Activated B cell treated with CpG ODN at 0.5 μM for 24 hours (primary cell): ENCODE measurements at regions of chr2 and their contacts with region 1.

Region 1: DNA sequence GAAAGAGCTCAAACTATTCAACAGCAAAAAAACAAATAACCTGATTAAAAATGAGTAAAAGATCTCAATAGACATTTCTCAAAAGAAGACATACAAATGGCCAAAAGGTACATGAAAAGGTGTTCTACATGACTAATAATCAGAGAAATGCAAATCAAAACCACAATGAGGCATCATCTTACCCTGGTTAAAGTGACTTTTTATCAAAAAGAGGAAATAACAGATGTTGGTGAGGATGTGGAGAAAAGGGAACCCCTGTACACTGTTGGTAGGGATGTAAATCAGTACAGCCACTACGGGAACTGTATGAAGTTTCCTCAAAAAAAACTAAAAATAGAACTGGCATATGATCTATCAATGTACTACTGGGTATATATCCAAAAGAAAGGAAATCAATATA is 39.8 kb upstream of the TMEM163 start:
- DNase-seq: no peak
- ATAC-seq: peak; percentile 95
- H3K4me3 Mint-ChIP-seq: peak overlapping the region; percentile 16
- H3K27ac Mint-ChIP-seq: peak overlapping the region; percentile 74
- H3K4me1 Mint-ChIP-seq: peaks cover 30% of the 10 kb centered on the region
- H3K27me3 Mint-ChIP-seq: no peaks in the 10 kb centered on the region
- CTCF ChIP-seq: no peak

Region 2: DNA sequence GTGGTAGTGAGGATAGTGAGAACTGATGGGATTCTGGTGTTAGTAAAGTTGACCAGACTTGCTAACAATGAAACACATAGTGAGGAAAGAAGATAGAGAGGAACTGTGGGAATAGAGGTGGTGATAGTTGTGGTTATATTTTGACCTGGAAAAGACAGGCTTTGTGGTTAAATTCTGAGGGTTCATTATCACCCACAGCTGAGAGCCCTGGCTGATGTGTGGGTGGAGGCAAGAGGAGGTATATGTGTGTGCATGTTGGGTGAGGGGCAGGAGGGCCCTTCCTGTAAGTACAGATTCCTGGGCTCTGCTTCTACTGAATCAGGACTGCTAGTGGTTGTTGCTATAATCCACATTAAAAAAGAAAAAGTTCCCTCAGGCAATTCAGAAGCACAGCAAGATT is 13.6 kb before region 1 on chr2:
- CTCF ChIA-PET with region 1: interaction called, 4 read pairs
- POLR2A ChIA-PET with region 1: interaction called, 37 read pairs
- intact Hi-C with region 1: loop called (anchors 1 kb)
- DNase-seq: no peak
- ATAC-seq: no peak
- H3K4me3 Mint-ChIP-seq: no peak overlapping the region
- H3K27ac Mint-ChIP-seq: peak overlapping the region; percentile 5
- H3K4me1 Mint-ChIP-seq: peaks cover 32% of the 10 kb centered on the region
- H3K27me3 Mint-ChIP-seq: no peaks in the 10 kb centered on the region
- CTCF ChIP-seq: no peak

Region 3: GRCh38 chr2:134818321-134818720 is 59.7 kb after region 1 on chr2:
- CTCF ChIA-PET with region 1: no interaction called
- POLR2A ChIA-PET with region 1: interaction called, 11 read pairs
- intact Hi-C with region 1: no loop called
- DNase-seq: no peak
- ATAC-seq: no peak
- H3K4me3 Mint-ChIP-seq: no peak overlapping the region
- H3K27ac Mint-ChIP-seq: no peak overlapping the region
- H3K4me1 Mint-ChIP-seq: no peaks in the 10 kb centered on the region
- H3K27me3 Mint-ChIP-seq: peaks cover 8% of the 10 kb centered on the region
- CTCF ChIP-seq: no peak